ENCODE measurements at regions of chr12 and their contacts with region 1.

Region 1: DNA sequence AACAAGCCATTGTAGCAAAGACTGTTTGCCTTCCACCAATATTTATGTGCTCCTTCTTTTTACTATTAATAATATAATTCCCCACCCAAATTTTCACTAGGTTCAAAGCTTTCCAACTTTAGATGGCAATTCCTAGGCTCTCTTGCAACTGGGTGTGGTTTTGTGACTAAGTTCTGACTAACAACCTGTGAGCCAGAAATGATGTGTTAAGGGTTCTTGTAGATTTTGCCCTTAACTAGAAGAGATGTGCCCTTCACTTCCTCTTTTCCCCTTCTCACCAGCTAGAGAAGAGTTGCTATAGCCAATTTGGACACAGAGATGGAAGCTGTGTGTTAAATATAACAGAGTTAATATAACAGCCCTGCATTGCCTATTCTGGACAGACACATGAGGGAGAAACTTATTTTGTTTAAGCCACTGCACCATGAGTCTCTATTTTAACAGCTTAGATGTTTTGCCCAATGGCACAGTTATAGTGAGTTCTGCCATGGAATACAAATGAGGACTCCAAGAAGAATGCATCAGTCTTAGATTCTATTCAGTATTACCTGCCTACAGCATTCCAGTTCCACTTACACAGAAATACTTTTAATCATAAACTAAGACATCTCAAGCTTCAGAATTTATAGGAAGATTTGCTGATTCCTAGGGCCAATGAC is 216.2 kb downstream of the DUSP6 start:
- DNase-seq: peak; percentile 10
- ATAC-seq: peak; percentile 60
- H3K4me3 Mint-ChIP-seq: no peak overlapping the region
- H3K27ac Mint-ChIP-seq: no peak overlapping the region
- H3K4me1 Mint-ChIP-seq: peaks cover 30% of the 10 kb centered on the region
- H3K27me3 Mint-ChIP-seq: peaks cover 8% of the 10 kb centered on the region

Region 2: DNA sequence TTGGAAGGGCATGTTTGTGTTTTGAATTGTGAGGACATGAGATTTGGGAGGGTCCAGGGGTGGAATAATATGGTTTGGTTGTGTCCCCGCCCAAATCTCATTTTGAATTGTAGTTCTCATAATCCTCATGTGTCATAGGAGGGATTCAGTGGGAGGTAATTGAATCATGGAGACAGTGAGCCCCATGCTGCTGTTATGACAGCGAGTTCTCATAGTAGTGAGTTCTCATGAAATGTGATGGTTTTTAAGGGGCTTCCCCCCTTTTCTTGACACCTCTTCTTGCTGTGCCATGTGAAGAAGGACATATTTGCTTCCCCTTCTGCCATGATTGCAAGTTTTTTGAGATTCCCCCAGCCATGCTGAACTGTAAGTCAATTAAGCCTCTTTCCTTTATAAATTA is 43.8 kb before region 1 on chr12:
- CTCF ChIA-PET with region 1: no interaction called
- POLR2A ChIA-PET with region 1: no interaction called
- intact Hi-C with region 1: loop called in 1 of 2 experiments (anchors 1 kb)
- DNase-seq: peak; percentile 53
- ATAC-seq: peak; percentile 90
- H3K4me3 Mint-ChIP-seq: no peak overlapping the region
- H3K27ac Mint-ChIP-seq: peak overlapping the region; percentile 85
- H3K4me1 Mint-ChIP-seq: peaks cover 27% of the 10 kb centered on the region
- H3K27me3 Mint-ChIP-seq: no peaks in the 10 kb centered on the region

Region 3: DNA sequence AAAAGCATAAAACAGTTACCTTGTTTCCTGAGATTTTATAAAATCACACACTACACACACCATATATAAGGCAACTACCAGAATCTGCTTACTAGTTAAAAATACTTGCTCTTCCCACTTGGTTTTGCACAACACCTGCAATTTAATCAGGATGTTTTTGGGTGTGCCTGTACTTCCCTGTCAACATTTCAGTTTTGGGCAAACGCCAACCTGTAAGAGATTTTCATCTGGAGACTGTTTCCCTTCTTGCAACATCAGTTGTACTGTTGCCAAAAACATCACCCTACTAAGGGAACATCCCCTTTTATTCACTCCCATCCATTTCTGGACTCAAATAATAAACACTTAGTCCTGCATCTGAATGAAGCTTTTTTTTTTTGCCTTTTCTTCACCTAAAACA is 43.9 kb after region 1 on chr12:
- CTCF ChIA-PET with region 1: interaction called, 3 read pairs
- POLR2A ChIA-PET with region 1: no interaction called
- intact Hi-C with region 1: loop called in 1 of 2 experiments (anchors 1 kb)
- DNase-seq: no peak
- ATAC-seq: no peak
- H3K4me3 Mint-ChIP-seq: no peak overlapping the region
- H3K27ac Mint-ChIP-seq: peak overlapping the region; percentile 71
- H3K4me1 Mint-ChIP-seq: peaks cover 33% of the 10 kb centered on the region
- H3K27me3 Mint-ChIP-seq: no peaks in the 10 kb centered on the region